Activated naive CD4-positive, alpha-beta T cell treated with anti-CD3 and anti-CD28 coated beads for 36 hours (primary cell): ENCODE measurements at regions of chr6 and their contacts with region 1.

Region 1: DNA sequence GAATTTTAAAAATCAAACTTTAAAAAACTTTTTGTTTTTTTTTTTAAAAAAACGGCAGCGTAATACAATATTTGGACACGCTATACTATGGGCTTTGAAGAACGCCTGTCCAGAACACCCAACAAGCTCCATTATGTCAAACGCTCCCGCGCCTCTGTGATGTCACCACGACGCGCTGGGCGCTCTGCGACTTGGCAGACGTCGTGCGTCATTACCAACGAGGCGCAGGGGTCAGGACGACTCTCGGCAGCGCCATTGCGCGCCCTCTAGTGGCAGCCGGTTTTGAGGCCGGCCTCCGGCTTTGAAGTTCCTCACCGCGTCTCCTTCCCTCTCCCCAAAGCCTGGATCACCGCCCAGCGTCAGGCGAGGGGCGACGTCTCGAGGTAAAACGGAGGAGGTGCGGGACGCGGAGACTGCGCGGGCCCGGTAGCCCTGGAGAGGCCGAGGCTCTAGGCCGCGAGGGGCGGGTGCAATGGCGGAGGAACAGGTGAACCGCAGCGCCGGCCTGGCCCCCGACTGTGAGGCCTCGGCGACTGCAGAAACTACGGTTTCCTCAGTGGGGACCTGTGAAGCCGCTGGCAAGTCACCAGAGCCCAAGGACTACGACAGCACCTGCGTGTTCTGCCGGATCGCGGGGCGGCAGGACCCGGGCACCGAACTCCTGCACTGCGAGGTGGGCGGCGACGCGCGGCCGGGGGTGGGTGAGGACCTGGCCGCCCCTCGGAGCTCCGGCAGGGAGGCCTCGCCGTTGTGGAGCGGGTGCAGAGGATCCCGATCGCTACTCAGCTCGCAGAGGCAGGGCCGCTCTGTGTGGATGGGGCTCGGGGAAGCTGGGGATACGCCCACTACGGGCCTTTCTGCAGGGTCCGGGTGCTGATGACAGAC is at the start of gene HINT3:
- DNase-seq: peak; percentile 99
- H3K4me3 Mint-ChIP-seq: no peak within 1 kb of the TSS
- H3K27ac Mint-ChIP-seq: peak within 1 kb of the TSS; percentile 72
- H3K4me1 Mint-ChIP-seq: peaks cover 9% of the 10 kb centered on the region
- H3K27me3 Mint-ChIP-seq: peaks cover 2% of the 10 kb centered on the region
- total RNA-seq, gene HINT3: 10.6 to 10.9 TPM

Region 2: GRCh38 chr6:124683507-124683906 is 1273.2 kb before region 1 on chr6:
- CTCF ChIA-PET with region 1: no interaction called
- intact Hi-C with region 1: no loop called
- DNase-seq: no peak
- H3K4me3 Mint-ChIP-seq: no peak overlapping the region
- H3K27ac Mint-ChIP-seq: no peak overlapping the region
- H3K4me1 Mint-ChIP-seq: no peaks in the 10 kb centered on the region
- H3K27me3 Mint-ChIP-seq: no peaks in the 10 kb centered on the region

Region 3: DNA sequence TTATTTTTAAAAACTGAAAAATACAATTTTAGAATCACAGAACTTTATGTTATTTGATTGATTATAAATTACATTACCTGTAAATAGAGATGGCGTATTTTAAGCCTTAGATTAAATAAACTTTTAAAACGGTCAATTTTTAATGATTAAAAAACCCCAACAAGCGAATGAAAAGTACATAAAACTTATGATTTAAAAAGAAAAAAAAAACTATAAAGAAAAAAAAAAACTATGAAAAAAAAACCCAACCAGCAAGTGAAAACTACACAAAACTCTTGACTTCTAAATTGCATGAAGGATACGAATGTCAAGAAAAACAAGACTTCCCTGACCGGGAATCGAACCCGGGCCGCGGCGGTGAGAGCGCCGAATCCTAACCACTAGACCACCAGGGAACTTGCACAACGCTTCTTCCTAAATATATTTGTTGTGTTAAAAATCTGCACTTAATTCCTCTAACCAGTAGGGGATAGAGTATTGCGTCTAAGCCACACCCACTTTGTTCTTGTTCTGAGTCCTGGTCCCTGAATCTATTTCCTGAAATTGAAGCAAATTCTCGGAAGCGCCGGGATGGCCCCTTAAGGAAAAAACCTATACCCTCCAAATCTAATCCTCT is 176.7 kb before region 1 on chr6:
- CTCF ChIA-PET with region 1: interaction called, 28 read pairs
- intact Hi-C with region 1: loop called (anchors 1 kb)
- DNase-seq: peak; percentile 90
- H3K4me3 Mint-ChIP-seq: no peak overlapping the region
- H3K27ac Mint-ChIP-seq: no peak overlapping the region
- H3K4me1 Mint-ChIP-seq: peaks cover 15% of the 10 kb centered on the region
- H3K27me3 Mint-ChIP-seq: peaks cover 1% of the 10 kb centered on the region

Region 4: DNA sequence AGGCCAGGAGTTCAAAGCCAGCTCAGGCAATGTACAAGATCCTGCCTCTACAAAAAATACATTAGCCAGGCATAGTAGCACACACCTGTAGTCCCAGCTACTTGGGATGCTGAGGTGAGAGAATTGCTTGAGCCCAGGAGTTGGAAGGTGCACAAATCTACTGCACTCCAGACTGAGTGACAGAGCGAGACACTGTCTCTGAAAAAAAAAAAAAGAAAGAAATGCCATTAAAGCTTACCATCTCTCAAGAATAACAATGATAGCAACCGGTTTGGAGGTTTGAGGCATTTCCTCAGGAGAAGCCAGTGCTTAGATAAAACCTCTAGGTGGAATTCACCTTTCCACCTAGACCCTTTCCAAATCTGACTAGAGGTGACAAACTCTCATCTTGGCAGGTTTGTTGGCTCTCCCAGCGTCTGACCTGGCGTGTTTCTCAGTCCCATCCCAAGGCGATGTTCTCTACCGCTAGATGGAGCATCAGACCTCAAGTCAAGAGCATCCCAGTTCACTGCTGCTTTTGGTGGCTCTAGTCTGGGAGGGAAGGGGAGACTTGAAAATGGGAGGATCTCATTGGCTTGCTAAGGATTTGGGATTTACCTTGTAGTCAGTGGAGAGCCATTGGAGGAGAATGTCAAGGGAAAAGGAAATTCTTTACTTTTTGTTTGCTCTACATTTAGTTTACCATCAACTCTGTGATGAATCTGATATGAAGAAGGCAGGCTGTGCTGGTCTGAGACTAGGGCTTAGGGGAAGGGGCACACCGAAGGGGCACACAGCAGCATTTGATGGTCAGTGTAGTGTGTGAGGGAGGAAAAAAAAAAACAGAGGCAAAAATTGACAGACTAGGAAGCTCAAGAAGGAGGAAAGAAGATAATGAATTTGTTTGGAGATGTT is 98.1 kb before region 1 on chr6:
- CTCF ChIA-PET with region 1: interaction called, 6 read pairs
- intact Hi-C with region 1: loop called (anchors 1 kb)
- DNase-seq: peak; percentile 57
- H3K4me3 Mint-ChIP-seq: no peak overlapping the region
- H3K27ac Mint-ChIP-seq: no peak overlapping the region
- H3K4me1 Mint-ChIP-seq: no peaks in the 10 kb centered on the region
- H3K27me3 Mint-ChIP-seq: no peaks in the 10 kb centered on the region

Region 5: GRCh38 chr6:125906158-125906998 is 50.4 kb before region 1 on chr6:
- CTCF ChIA-PET with region 1: interaction called, 27 read pairs
- intact Hi-C with region 1: loop called (anchors 1 kb)
- DNase-seq: peak; percentile 72
- H3K4me3 Mint-ChIP-seq: no peak overlapping the region
- H3K27ac Mint-ChIP-seq: peak overlapping the region; percentile 20
- H3K4me1 Mint-ChIP-seq: peaks cover 25% of the 10 kb centered on the region
- H3K27me3 Mint-ChIP-seq: no peaks in the 10 kb centered on the region

Region 6: DNA sequence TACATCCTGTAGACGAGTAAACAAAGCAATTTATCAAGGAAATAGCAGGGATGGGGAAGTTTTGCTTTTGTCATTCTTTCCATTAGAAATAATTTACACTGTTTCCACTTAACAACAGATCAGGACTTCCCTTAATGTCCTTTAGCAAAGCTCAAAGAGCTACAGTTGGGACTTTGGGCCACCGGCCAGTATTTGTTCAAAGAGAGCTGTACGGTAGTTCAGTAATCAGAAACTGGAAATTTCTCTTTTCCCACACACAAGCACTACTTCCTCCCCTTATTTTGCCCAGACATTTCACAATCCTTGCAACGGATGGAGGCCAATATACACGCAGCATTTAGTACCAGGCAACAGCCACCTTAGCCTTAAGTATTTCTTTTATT is 12.3 kb before region 1 on chr6:
- CTCF ChIA-PET with region 1: interaction called, 15 read pairs
- intact Hi-C with region 1: no loop called
- DNase-seq: no peak
- H3K4me3 Mint-ChIP-seq: no peak overlapping the region
- H3K27ac Mint-ChIP-seq: no peak overlapping the region
- H3K4me1 Mint-ChIP-seq: peaks cover 16% of the 10 kb centered on the region
- H3K27me3 Mint-ChIP-seq: peaks cover 6% of the 10 kb centered on the region

Region 7: DNA sequence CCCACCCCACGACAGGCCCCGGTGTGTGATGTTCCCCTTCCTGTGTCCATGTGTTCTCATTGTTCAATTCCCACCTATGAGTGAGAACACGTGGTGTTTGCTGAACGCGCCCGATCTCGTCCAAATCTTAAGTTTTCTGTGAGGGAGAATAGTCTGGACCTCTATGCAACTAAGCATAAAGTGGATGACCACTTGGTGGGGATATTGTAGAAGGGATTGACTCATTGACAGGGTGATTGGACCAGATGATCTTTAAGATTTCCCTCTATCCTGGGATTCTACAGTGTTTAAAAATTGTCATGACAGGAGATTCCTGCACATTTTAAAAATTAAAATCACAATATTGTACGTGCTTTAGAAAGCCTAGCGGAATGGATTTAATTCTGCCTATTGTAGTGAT is 170.9 kb after region 1 on chr6:
- CTCF ChIA-PET with region 1: no interaction called
- intact Hi-C with region 1: no loop called
- DNase-seq: no peak
- H3K4me3 Mint-ChIP-seq: no peak overlapping the region
- H3K27ac Mint-ChIP-seq: no peak overlapping the region
- H3K4me1 Mint-ChIP-seq: no peaks in the 10 kb centered on the region
- H3K27me3 Mint-ChIP-seq: no peaks in the 10 kb centered on the region